K562 (cell line): ENCODE measurements at regions of chr15 and their contacts with region 1.

Region 1: GRCh38 chr15:41022487-41023090 is 69.3 kb downstream of the CHAC1 start:
- DNase-seq: peak; percentile 30 to 46 (median 40)
- ATAC-seq: peak; percentile 82
- H3K4me3 ChIP-seq: no peak overlapping the region
- H3K27ac ChIP-seq: no peak overlapping the region
- H3K4me1 ChIP-seq: no peaks in the 10 kb centered on the region
- H3K27me3 ChIP-seq: no peaks in the 10 kb centered on the region
- CTCF ChIP-seq: peak; percentile 65 to 72 (median 66)
- EP300 ChIP-seq: no peak
- POLR2A ChIP-seq: no peak
- RAD21 ChIP-seq: peak; percentile 52 to 63

Region 2: GRCh38 chr15:40906091-40906990 is 116.2 kb before region 1 on chr15:
- CTCF ChIA-PET with region 1: interaction called, 58 read pairs
- POLR2A ChIA-PET with region 1: interaction called, 4 read pairs
- in situ Hi-C with region 1: loop called (anchors 5 kb)
- intact Hi-C with region 1: loop called (anchors 1 kb)
- DNase-seq: peak; percentile 90 to 96 (median 94)
- ATAC-seq: peak; percentile 99
- H3K4me3 ChIP-seq: peak overlapping the region; percentile 34
- H3K27ac ChIP-seq: peak overlapping the region; percentile 52; the same call in 2 of the 3 replicates
- H3K4me1 ChIP-seq: peaks cover 11 to 27% of the 10 kb centered on the region in 2 experiments; a peak in 4 of 5 replicates
- H3K27me3 ChIP-seq: no peaks in the 10 kb centered on the region
- CTCF ChIP-seq: peak; percentile 87 to 96 (median 95)
- EP300 ChIP-seq: no peak
- POLR2A ChIP-seq: 0 out of 2 replicates have a peak, but pooled peaks have one; percentile 32
- RAD21 ChIP-seq: peak; percentile 82 to 87

Region 3: GRCh38 chr15:40914486-40914885 is 108.1 kb before region 1 on chr15:
- CTCF ChIA-PET with region 1: interaction called, 8 read pairs
- POLR2A ChIA-PET with region 1: no interaction called
- in situ Hi-C with region 1: loop called (anchors 5 kb)
- intact Hi-C with region 1: loop called (anchors 2 kb)
- DNase-seq: peak in 1 of 4 experiments; percentile 45
- ATAC-seq: peak; percentile 56; the same call in 2 of the 3 replicates
- H3K4me3 ChIP-seq: no peak overlapping the region
- H3K27ac ChIP-seq: no peak overlapping the region
- H3K4me1 ChIP-seq: peaks cover 0 to 33% of the 10 kb centered on the region in 2 experiments; a peak in 3 of 5 replicates
- H3K27me3 ChIP-seq: no peaks in the 10 kb centered on the region
- CTCF ChIP-seq: peak; percentile 61 to 91 (median 67)
- EP300 ChIP-seq: no peak
- POLR2A ChIP-seq: no peak
- RAD21 ChIP-seq: peak; percentile 23 to 66

Region 4: DNA sequence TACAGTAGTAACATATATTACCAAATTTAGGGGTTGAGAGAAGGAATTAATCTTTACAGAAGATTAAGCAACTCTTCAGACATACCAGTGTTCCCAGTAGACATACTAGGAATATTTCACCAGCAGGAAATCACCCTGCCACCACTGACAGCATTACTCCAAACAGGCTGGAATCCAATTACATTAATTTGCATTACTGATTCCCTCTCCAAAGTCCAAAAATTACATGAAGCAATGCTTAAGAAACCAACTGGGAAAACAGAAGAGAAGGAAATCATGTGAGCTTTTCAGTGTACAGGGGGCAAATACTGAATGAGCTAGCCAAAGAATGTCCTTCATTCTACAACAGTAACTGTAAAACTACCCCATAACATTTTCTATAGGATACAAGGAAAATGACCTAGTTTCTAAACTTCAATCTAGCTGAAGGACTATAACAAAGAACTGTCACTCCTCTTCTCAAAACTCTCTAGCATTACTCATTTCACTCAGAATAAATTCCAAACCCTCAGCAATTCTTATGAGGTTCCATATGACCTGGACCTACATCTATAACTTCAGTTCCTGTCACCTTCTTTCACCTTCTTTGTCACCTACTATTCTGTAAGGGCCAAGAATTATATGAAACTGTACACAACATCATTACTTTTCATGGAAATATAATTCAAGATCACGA is 20.8 kb after region 1 on chr15:
- CTCF ChIA-PET with region 1: no interaction called
- POLR2A ChIA-PET with region 1: interaction called, 14 read pairs
- in situ Hi-C with region 1: no loop called
- intact Hi-C with region 1: no loop called
- DNase-seq: no peak
- ATAC-seq: no peak
- H3K4me3 ChIP-seq: no peak overlapping the region
- H3K27ac ChIP-seq: no peak overlapping the region
- H3K4me1 ChIP-seq: no peaks in the 10 kb centered on the region; a peak in 2 of 5 replicates
- H3K27me3 ChIP-seq: no peaks in the 10 kb centered on the region
- CTCF ChIP-seq: no peak
- EP300 ChIP-seq: no peak
- POLR2A ChIP-seq: no peak
- RAD21 ChIP-seq: no peak

Region 5: DNA sequence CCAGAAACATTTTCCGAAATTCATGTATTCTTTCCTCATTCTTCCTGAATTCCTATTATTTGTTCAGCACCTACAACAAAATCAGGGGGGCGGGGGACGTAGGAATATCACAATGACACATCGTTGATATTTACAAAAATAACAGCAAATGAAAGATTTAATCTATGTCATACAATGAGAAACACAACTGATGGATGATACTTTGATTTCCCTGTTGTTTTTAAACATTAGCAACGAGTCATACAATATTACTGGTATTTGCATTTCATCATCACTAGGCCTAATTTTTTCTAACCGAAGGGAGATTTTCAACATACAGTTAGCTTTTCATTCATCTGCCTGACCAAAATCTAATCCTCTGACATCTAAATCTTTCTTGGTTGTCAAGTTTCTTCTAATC is 138.7 kb after region 1 on chr15:
- CTCF ChIA-PET with region 1: no interaction called
- POLR2A ChIA-PET with region 1: no interaction called
- in situ Hi-C with region 1: no loop called
- intact Hi-C with region 1: no loop called
- DNase-seq: no peak
- ATAC-seq: no peak
- H3K4me3 ChIP-seq: no peak overlapping the region
- H3K27ac ChIP-seq: no peak overlapping the region
- H3K4me1 ChIP-seq: no peaks in the 10 kb centered on the region; a peak in 1 of 5 replicates
- H3K27me3 ChIP-seq: no peaks in the 10 kb centered on the region; a peak in 1 of 5 replicates
- CTCF ChIP-seq: no peak
- EP300 ChIP-seq: no peak
- POLR2A ChIP-seq: no peak
- RAD21 ChIP-seq: no peak